ENCODE measurements at regions of chr3 and their contacts with region 1.

Region 1: GRCh38 chr3:156674046-156674910 is at the start of gene TIPARP:
- DNase-seq: peak; percentile 99 to 100
- H3K4me3 ChIP-seq: peak within 1 kb of the TSS; percentile 87 to 95
- H3K27ac ChIP-seq: peak within 1 kb of the TSS; percentile 95 to 98
- H3K4me1 ChIP-seq: peaks cover 0 to 34% (median 10%) of the 10 kb centered on the region in 4 donors
- H3K27me3 ChIP-seq: no peaks in the 10 kb centered on the region
- CTCF ChIP-seq: peak; percentile 76 to 79

Region 2: DNA sequence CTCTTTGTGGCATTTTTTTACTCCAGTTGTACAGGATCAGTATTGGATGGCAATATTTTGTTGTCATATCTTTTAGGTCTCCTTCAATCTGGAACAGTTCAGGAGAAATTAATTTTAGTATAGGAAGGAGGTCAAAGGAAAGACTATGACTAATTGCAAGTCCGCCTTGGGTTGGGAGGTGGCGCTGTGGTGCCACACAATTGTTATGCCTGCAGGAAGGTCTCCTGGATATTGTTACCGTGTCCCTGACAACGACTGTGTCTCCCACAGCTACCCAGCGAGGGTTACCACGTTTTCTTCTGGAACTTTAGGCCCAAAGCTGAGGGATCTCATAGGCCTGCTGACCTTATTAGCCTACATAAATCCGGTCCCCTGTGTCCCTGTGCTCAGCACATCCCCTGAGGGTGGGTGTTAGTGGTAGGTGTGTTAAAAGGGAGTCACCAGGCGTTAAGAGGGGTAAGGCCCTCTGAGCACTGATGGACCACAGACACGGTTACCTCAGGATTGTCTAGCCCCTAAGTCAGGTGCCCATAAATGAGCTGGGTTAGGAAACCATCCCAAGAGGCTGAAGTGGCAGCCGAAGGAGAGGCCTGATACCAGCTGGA is 522.4 kb before region 1 on chr3:
- intact Hi-C with region 1: loop called (anchors 10 kb)
- DNase-seq: peak; percentile 59 to 81
- H3K4me3 ChIP-seq: peak overlapping the region; percentile 3 to 5
- H3K27ac ChIP-seq: peak overlapping the region; percentile 70 to 73
- H3K4me1 ChIP-seq: peaks cover 0 to 97% (median 46%) of the 10 kb centered on the region in 4 donors
- H3K27me3 ChIP-seq: no peaks in the 10 kb centered on the region
- CTCF ChIP-seq: peak; percentile 73 to 77

Region 3: DNA sequence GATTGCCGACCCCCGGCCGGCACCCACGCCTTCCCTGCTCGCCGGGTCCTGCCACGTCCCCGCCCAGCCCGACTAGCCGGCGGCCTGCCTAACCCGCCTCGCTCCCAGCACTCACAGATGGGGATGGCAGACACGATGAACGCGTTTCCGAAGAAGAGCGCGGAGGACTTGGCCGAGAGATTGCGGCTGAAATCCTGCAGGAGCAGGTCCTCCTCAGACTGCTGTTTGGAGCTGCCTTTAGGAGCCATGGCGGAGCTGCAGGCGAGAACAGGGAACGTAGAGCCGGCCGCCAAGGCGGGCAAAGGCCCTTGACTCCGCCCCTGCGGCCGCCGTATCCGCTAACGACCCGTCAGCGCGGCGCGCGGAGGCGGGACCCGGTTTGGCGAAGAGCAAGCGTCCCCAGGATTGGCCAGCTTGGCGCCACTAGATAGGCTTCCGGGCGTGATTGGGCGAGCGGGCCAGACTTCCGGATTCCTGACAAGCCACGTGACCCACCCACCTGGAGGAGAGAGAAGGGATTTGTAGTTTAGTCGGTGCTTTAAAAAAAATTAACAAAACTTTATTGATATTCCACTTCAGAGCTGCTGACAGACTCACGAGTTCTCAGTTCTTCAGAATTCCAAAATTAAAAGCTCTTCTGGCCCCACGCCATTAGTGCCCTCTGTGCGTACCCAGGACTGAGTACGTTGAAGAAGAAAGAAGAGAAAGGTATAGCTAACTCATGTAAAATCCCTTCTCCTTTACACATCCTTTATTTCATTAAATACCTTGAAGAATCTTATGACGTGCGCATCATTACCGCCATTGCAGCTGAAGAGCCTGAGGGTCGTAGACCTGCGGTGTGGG is 119.2 kb before region 1 on chr3 and contains the start of gene SSR3:
- intact Hi-C with region 1: loop called (anchors 10 kb)
- DNase-seq: peak; percentile 99 to 100
- H3K4me3 ChIP-seq: peak within 1 kb of the TSS; percentile 84 to 85
- H3K27ac ChIP-seq: peak within 1 kb of the TSS; percentile 76 to 85
- H3K4me1 ChIP-seq: peaks cover 0 to 38% (median 19%) of the 10 kb centered on the region in 4 donors
- H3K27me3 ChIP-seq: no peaks in the 10 kb centered on the region
- CTCF ChIP-seq: peak; percentile 46 to 78

Region 4: GRCh38 chr3:156727519-156728205 is 53.4 kb after region 1 on chr3:
- intact Hi-C with region 1: no loop called
- DNase-seq: no peak
- H3K4me3 ChIP-seq: no peak overlapping the region
- H3K27ac ChIP-seq: no peak overlapping the region
- H3K4me1 ChIP-seq: no peaks in the 10 kb centered on the region
- H3K27me3 ChIP-seq: no peaks in the 10 kb centered on the region
- CTCF ChIP-seq: no peak

Region 5: DNA sequence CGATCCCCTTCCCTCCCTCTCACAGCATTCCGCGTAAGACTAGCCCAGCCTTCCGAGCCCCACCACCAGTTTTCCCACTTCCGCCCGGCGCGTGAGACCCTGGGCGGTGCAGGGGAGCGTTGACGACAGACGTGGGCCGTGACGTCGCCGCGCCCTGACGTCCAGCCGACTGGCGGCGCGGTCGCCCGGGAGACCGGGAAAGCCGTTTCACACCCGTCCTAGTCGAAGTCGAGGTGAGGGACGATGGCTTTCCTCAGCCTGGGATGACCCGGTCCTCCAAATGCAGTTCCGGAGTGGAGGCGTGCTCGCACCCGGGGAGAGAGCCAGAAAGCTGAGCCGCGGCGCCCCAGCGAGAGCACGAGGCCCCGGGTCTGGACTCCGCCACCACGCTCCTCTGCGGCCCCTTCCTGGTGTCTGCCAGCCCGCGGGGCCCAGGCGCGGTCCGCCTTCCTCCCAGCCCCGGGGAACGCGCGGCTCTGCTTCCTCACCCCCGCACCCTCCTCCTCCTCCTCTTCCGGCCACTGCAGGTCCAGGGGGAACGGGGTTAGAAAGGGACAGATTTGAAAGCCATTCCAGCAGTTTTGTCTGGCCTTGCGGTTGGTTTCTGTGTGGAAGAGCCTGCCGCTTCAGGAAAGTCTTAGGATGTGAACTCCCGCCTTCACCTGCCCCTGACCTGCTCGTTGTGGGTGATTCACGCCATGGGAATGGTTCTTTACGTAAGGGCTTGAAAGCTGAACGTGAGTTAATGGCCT is 152.0 kb after region 1 on chr3 and contains the start of gene LEKR1:
- intact Hi-C with region 1: loop called (anchors 5 kb)
- DNase-seq: peak; percentile 76 to 91
- H3K4me3 ChIP-seq: peak within 1 kb of the TSS; percentile 67 to 74
- H3K27ac ChIP-seq: peak within 1 kb of the TSS; percentile 84 to 89
- H3K4me1 ChIP-seq: peaks cover 0 to 7% (median 3%) of the 10 kb centered on the region in 4 donors
- H3K27me3 ChIP-seq: no peaks in the 10 kb centered on the region
- CTCF ChIP-seq: no peak

Region 6: DNA sequence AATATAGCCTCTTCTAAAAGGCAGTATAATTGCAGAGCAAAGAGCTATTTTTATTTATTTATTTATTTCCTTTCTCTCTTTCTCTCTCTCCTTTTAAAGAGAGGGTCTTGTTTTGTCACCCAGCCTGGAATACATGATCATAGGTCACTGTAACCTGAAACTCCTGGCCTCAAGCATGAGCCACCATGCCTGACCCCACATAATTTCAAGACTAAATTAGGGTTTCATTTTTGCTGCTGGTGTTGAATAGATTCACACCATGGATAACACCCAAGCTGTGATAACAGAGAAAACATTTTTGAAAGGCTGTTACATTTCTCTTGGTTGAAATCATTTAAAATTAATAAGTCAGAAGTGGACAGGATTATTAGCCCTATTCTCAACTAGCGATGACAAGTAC is 283.4 kb after region 1 on chr3:
- intact Hi-C with region 1: no loop called
- DNase-seq: no peak
- H3K4me3 ChIP-seq: no peak overlapping the region
- H3K27ac ChIP-seq: no peak overlapping the region
- H3K4me1 ChIP-seq: no peaks in the 10 kb centered on the region
- H3K27me3 ChIP-seq: no peaks in the 10 kb centered on the region
- CTCF ChIP-seq: no peak

Region 7: GRCh38 chr3:157136647-157137387 is 462.5 kb after region 1 on chr3:
- intact Hi-C with region 1: loop called (anchors 2 kb)
- DNase-seq: peak in 1 of 2 donors; percentile 27
- H3K4me3 ChIP-seq: no peak overlapping the region
- H3K27ac ChIP-seq: peak overlapping the region; percentile 72 to 87
- H3K4me1 ChIP-seq: peaks cover 0 to 54% (median 37%) of the 10 kb centered on the region in 4 donors
- H3K27me3 ChIP-seq: no peaks in the 10 kb centered on the region
- CTCF ChIP-seq: no peak